CD8-positive, alpha-beta T cell (primary cell): ENCODE measurements at regions of chr19 and their contacts with region 1.

Region 1: DNA sequence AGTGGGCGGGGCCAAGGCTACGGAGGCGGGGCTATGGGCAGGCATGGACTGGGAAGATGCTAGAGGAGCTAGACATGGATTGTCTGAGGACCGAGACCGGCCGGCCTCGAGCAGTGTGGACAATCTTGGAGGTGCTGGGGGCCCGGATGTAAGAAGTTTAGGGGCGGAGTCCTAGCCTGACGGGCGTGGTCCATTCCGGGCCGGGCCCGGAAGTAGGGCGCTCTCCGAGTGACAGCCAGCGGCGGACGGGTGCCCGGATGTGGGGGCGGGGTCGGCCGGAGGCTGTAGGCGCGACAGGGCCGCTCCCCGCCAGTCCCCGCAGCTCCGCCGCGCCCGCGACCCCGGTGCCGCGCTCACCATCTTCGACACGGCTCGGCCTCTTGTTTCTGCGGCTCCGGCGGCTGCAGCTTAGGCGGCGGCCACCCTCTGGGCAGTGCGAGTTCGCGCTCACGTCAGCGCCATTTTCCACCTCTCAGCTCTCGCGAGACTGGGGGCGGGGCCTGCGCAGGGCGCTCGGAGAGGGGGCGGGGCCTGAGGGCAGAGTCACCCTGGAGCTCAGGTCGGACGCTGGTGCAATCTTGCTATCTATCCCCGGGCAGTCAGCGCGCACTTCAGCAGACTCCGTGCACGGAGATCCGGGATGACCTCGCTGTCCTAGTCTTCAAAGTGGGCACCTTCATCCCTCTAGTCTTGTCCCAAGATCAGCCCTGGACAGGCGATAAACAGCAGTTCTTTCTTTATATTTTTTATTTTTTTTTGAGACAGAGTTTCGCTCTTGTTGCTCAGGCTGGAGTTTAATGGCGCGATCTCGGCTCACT is at the start of gene ZNF414:
- DNase-seq: peak; percentile 96 to 99 (median 97)
- ATAC-seq: peak; percentile 76
- H3K4me3 ChIP-seq: peak within 1 kb of the TSS; percentile 59 to 98
- H3K4me3 Mint-ChIP-seq: peak within 1 kb of the TSS; percentile 95
- H3K27ac ChIP-seq: peak within 1 kb of the TSS; percentile 90 to 96
- H3K27ac Mint-ChIP-seq: peak within 1 kb of the TSS; percentile 99
- H3K4me1 ChIP-seq: peaks cover 65% of the 10 kb centered on the region
- H3K4me1 Mint-ChIP-seq: peaks cover 51% of the 10 kb centered on the region
- H3K27me3 ChIP-seq: no peaks in the 10 kb centered on the region
- H3K27me3 Mint-ChIP-seq: no peaks in the 10 kb centered on the region
- CTCF ChIP-seq: no peak
- total RNA-seq, gene ZNF414: 26.3 to 33.1 TPM

Region 2: DNA sequence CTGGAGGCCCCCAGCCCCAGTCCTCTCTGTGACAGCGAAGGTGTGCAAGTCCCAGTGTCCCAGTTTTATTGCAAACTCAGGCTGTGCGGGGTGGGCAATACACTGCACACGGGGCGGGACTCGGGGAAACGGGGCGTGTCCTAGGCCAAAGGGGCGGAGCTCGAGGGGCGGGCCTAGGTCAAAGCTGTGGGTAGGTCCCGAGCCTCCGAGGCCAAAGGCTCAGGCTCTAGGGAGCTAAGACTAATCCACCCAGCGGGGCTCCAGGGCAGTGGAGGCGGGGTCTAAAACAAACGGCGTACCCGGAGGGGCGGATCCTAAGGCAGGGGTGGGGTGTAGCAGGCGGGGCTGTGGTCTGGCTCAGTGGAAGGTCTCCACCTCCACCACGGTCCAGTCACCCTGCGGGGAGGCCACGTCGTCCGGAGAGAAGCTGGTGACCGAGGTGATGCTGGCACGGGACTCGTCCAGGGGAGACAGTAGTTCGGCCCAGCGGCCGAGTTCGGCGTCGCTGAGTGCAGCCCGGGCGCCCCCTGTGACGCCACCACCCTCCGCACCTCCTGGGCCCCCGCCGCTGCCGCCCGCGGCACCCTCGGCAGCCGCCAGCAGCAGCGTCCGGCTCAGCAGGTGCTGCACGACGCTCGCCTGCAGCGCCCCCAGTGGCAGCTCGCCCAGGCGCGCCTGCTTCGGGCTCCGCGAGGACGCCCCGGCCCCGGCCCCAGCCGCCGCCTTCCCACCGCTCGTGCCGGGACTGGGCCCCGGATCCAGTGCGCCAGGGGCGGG is 645.0 kb before region 1 on chr19:
- CTCF ChIA-PET with region 1: no interaction called
- POLR2A ChIA-PET with region 1: no interaction called
- intact Hi-C with region 1: loop called in 1 of 2 experiments (anchors 5 kb)
- DNase-seq: peak; percentile 71 to 95 (median 85)
- ATAC-seq: peak; percentile 62
- H3K4me3 ChIP-seq: peak overlapping the region; percentile 61 to 62
- H3K4me3 Mint-ChIP-seq: peak overlapping the region; percentile 82
- H3K27ac ChIP-seq: peak overlapping the region; percentile 64 to 65
- H3K27ac Mint-ChIP-seq: peak overlapping the region; percentile 90
- H3K4me1 ChIP-seq: peaks cover 63% of the 10 kb centered on the region
- H3K4me1 Mint-ChIP-seq: peaks cover 44% of the 10 kb centered on the region
- H3K27me3 ChIP-seq: peaks cover 4 to 25% of the 10 kb centered on the region in 2 experiments
- H3K27me3 Mint-ChIP-seq: peaks cover 27% of the 10 kb centered on the region
- CTCF ChIP-seq: peak; percentile 82

Region 3: DNA sequence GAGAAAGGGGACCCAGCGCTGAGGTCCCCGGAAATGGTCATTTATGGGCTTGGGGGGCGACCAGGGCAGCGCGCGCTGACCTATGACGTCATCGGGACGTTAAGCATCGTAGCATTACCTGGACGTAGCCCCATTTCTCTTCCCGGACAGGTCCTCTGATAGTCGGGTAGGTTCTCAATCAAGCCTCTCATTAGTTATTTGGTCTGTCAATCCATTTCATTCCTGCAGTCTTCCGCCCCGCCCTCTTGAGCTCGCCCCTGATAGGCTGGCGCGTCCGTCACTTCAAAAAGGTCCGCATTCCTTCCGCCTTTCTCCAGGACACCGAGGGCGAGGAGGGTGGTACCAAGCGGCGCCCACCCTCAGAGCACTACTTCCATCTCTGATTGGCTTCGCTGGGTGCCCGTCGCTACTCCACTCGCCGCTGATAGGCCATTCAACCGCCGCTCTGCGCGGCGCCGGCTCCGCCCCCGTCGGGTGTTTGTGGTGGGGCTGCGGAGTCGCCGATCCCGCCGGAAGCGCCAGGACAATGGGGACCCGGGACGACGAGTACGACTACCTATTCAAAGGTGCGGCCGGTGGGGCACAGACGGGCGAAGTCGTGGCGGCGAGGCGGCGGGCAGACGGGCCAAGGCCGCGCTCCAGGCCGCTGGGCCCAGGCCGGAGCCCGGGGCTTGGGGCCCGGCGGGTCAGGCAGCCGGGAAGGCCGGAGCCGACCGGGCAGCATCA is 123.8 kb before region 1 on chr19 and contains the start of gene RAB11B:
- CTCF ChIA-PET with region 1: no interaction called
- POLR2A ChIA-PET with region 1: interaction called, 6 read pairs
- intact Hi-C with region 1: loop called in 1 of 2 experiments (anchors 1 kb)
- DNase-seq: peak; percentile 94 to 100 (median 98)
- ATAC-seq: peak; percentile 87
- H3K4me3 ChIP-seq: peak within 1 kb of the TSS; percentile 62 to 89
- H3K4me3 Mint-ChIP-seq: peak within 1 kb of the TSS; percentile 96
- H3K27ac ChIP-seq: peak within 1 kb of the TSS; percentile 85 to 86
- H3K27ac Mint-ChIP-seq: peak within 1 kb of the TSS; percentile 95
- H3K4me1 ChIP-seq: peaks cover 17% of the 10 kb centered on the region
- H3K4me1 Mint-ChIP-seq: peaks cover 36% of the 10 kb centered on the region
- H3K27me3 ChIP-seq: no peaks in the 10 kb centered on the region
- H3K27me3 Mint-ChIP-seq: no peaks in the 10 kb centered on the region
- CTCF ChIP-seq: no peak
- total RNA-seq, gene RAB11B: 60.2 to 61.4 TPM

Region 4: GRCh38 chr19:8444645-8445487 is 69.0 kb before region 1 on chr19 and contains the start of gene HNRNPM:
- CTCF ChIA-PET with region 1: interaction called, 5 read pairs
- POLR2A ChIA-PET with region 1: interaction called, 11 read pairs
- intact Hi-C with region 1: loop called in 1 of 2 experiments (anchors 1 kb)
- DNase-seq: peak; percentile 99 to 100 (median 100)
- ATAC-seq: peak; percentile 93
- H3K4me3 ChIP-seq: peak within 1 kb of the TSS; percentile 69 to 81
- H3K4me3 Mint-ChIP-seq: peak within 1 kb of the TSS; percentile 97
- H3K27ac ChIP-seq: peak within 1 kb of the TSS; percentile 93 to 96
- H3K27ac Mint-ChIP-seq: peak within 1 kb of the TSS; percentile 98
- H3K4me1 ChIP-seq: peaks cover 34% of the 10 kb centered on the region
- H3K4me1 Mint-ChIP-seq: peaks cover 40% of the 10 kb centered on the region
- H3K27me3 ChIP-seq: no peaks in the 10 kb centered on the region
- H3K27me3 Mint-ChIP-seq: no peaks in the 10 kb centered on the region
- CTCF ChIP-seq: no peak
- total RNA-seq, gene HNRNPM: 268 to 278 TPM

Region 5: GRCh38 chr19:8569066-8569771 is 55.3 kb after region 1 on chr19:
- CTCF ChIA-PET with region 1: interaction called, 12 read pairs
- POLR2A ChIA-PET with region 1: interaction called, 81 read pairs
- intact Hi-C with region 1: loop called in 1 of 2 experiments (anchors 2 kb)
- DNase-seq: peak; percentile 33 to 94 (median 81)
- ATAC-seq: peak; percentile 80
- H3K4me3 ChIP-seq: peak overlapping the region; percentile 26 to 32
- H3K4me3 Mint-ChIP-seq: peak overlapping the region; percentile 63
- H3K27ac ChIP-seq: peak overlapping the region; percentile 38 to 84
- H3K27ac Mint-ChIP-seq: peak overlapping the region; percentile 93
- H3K4me1 ChIP-seq: peaks cover 51% of the 10 kb centered on the region
- H3K4me1 Mint-ChIP-seq: peaks cover 73% of the 10 kb centered on the region
- H3K27me3 ChIP-seq: no peaks in the 10 kb centered on the region
- H3K27me3 Mint-ChIP-seq: no peaks in the 10 kb centered on the region
- CTCF ChIP-seq: no peak